Adrenal gland (tissue), 19 donors: ENCODE measurements at regions of chr6 and their contacts with region 1.

Region 1: DNA sequence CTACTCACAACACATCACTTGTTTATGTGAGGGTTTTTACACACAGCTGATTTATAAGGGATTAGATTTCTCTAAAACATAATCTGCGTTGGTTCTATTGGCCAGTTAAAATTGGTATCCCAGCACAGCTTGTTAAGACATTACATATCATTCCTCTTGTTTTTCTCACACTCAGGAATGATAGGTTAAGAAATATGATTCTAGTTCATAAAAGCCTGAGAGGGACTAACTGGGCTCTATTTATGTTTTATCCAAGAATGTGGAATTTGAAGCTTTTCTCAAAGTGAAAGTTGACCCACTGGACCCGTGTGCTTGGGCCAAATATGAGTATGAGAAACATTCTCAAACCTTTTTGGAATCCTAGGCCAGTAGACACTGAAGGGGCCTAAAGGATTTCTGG is 117.3 kb downstream of the TMEM170B start:
- DNase-seq: no peak
- H3K4me3 ChIP-seq: no peak overlapping the region
- H3K27ac ChIP-seq: no peak overlapping the region
- H3K4me1 ChIP-seq: peaks cover 0 to 10% of the 10 kb centered on the region in 2 donors
- H3K27me3 ChIP-seq: no peaks in the 10 kb centered on the region
- CTCF ChIP-seq: no peak
- POLR2A ChIP-seq: no peak

Region 2: GRCh38 chr6:12233693-12234571 is 579.1 kb after region 1 on chr6:
- intact Hi-C with region 1: loop called in 1 of 2 experiments (anchors 5 kb)
- DNase-seq: peak; percentile 27 to 68 (median 45)
- H3K4me3 ChIP-seq: no peak overlapping the region
- H3K27ac ChIP-seq: no peak overlapping the region
- H3K4me1 ChIP-seq: peaks cover 0 to 4% of the 10 kb centered on the region in 2 donors
- H3K27me3 ChIP-seq: no peaks in the 10 kb centered on the region
- CTCF ChIP-seq: peak; percentile 55 to 97 (median 88)
- POLR2A ChIP-seq: no peak